ENCODE measurements at regions of chr10 and their contacts with region 1.

Region 1: DNA sequence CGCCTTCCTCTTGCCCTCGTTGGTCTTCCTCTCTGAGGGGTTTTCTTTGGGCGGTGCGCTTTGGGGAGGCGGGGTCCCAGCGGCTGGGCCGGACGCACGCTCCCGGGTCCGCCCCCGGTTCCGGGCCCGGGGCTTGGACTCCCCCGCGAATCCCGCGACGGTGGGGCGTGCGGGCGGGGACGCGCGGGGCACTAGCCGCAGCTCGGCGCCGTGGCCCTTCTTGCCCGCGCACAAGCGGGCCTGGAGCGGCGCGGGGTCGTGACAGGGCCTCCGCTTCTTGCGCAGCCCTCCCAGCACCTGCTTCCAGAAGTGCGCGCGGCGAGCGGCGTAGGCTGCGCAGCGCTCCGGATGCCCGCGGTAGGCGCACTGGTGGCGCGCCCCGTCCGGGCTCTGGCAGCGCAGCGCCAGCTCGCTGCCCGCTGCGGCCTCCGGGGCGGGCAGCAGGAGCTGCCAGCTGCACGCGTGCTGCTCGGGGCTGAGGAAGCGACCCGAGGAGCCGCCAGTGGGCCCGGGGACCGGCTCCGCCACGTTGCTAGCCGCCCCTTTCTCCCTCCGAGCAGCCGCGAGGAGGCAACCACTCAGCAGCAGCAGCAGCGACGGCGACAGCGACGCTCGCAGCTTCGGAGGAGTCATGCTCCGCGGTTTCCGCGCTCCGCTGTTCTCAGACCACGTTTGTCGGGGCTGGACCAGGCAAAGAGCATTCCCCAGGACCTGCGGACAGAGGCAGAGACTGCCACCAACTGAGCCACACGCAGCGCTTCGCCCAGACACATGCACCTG is 759 bp downstream of the FGFBP3 start:
- DNase-seq: peak; percentile 70
- H3K4me3 Mint-ChIP-seq: peak overlapping the region; percentile 76
- H3K27ac Mint-ChIP-seq: peak overlapping the region; percentile 3
- H3K4me1 Mint-ChIP-seq: peaks cover 6% of the 10 kb centered on the region
- H3K27me3 Mint-ChIP-seq: peaks cover 4% of the 10 kb centered on the region
- CTCF ChIP-seq: peak; percentile 2

Region 2: GRCh38 chr10:91006001-91006751 is 902.4 kb before region 1 on chr10:
- CTCF ChIA-PET with region 1: no interaction called
- POLR2A ChIA-PET with region 1: no interaction called
- intact Hi-C with region 1: loop called (anchors 5 kb)
- DNase-seq: peak; percentile 73
- H3K4me3 Mint-ChIP-seq: no peak overlapping the region
- H3K27ac Mint-ChIP-seq: no peak overlapping the region
- H3K4me1 Mint-ChIP-seq: no peaks in the 10 kb centered on the region
- H3K27me3 Mint-ChIP-seq: no peaks in the 10 kb centered on the region
- CTCF ChIP-seq: peak; percentile 80

Region 3: GRCh38 chr10:91493313-91493712 is 415.2 kb before region 1 on chr10:
- CTCF ChIA-PET with region 1: no interaction called
- POLR2A ChIA-PET with region 1: no interaction called
- intact Hi-C with region 1: loop called (anchors 10 kb)
- DNase-seq: peak; percentile 43
- H3K4me3 Mint-ChIP-seq: no peak overlapping the region
- H3K27ac Mint-ChIP-seq: no peak overlapping the region
- H3K4me1 Mint-ChIP-seq: no peaks in the 10 kb centered on the region
- H3K27me3 Mint-ChIP-seq: no peaks in the 10 kb centered on the region
- CTCF ChIP-seq: peak; percentile 36

Region 4: DNA sequence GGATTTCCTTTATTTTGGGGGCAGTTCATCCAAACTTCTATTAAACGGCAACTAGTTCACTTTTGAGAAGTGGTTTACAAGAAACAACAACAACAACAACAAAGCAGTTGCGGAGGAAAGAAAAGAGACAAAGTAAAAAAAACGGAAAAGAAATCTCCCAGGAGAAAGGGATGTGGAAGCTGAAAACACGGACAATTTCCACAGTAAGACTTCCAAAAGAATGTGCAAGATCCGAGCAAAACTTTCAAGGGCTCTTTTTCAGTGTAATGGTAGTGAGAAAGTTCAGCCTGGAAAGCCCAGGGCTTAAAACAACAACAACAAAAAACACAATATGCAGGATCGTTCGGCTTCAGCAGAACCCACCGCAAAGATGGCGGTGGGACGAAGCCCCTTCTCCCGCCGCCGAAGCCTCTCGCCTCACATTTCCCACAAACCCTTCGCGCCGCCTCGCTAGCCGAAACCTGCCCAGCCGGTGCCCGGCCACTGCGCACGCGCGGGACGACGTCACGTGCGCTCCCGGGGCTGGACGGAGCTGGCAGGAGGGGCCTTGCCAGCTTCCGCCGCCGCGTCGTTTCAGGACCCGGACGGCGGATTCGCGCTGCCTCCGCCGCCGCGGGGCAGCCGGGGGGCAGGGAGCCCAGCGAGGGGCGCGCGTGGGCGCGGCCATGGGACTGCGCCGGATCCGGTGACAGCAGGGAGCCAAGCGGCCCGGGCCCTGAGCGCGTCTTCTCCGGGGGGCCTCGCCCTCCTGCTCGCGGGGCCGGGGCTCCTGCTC is 110.5 kb before region 1 on chr10 and contains the start of gene TNKS2:
- CTCF ChIA-PET with region 1: interaction called, 5 read pairs
- POLR2A ChIA-PET with region 1: interaction called, 23 read pairs
- intact Hi-C with region 1: no loop called
- DNase-seq: peak; percentile 93
- H3K4me3 Mint-ChIP-seq: peak within 1 kb of the TSS; percentile 87
- H3K27ac Mint-ChIP-seq: peak within 1 kb of the TSS; percentile 96
- H3K4me1 Mint-ChIP-seq: peaks cover 36% of the 10 kb centered on the region
- H3K27me3 Mint-ChIP-seq: peaks cover 19% of the 10 kb centered on the region
- CTCF ChIP-seq: no peak
- total RNA-seq, gene TNKS2: 48.3 and 50.3 TPM in 2 replicates

Region 5: GRCh38 chr10:91856637-91857036 is 51.9 kb before region 1 on chr10:
- CTCF ChIA-PET with region 1: no interaction called
- POLR2A ChIA-PET with region 1: interaction called, 5 read pairs
- intact Hi-C with region 1: loop called (anchors 1 kb)
- DNase-seq: peak; percentile 37
- H3K4me3 Mint-ChIP-seq: no peak overlapping the region
- H3K27ac Mint-ChIP-seq: no peak overlapping the region
- H3K4me1 Mint-ChIP-seq: no peaks in the 10 kb centered on the region
- H3K27me3 Mint-ChIP-seq: no peaks in the 10 kb centered on the region
- CTCF ChIP-seq: peak; percentile 32